Activated CD4-positive, alpha-beta T cell treated with anti-CD3 and anti-CD28 coated beads, Interleukin-2, amount 10 ng/mL, durations not matched to agents 24 days and 14 days (primary cell): ENCODE measurements at regions of chr10 and their contacts with region 1.

Region 1: GRCh38 chr10:45672181-45673073 is at the start of gene ZFAND4:
- DNase-seq: peak; percentile 98
- H3K4me3 Mint-ChIP-seq: peak within 1 kb of the TSS; percentile 96
- H3K27ac Mint-ChIP-seq: peak within 1 kb of the TSS; percentile 85
- H3K4me1 Mint-ChIP-seq: peaks cover 21% of the 10 kb centered on the region
- H3K27me3 Mint-ChIP-seq: no peaks in the 10 kb centered on the region
- total RNA-seq, gene ZFAND4: 9.1 and 9.3 TPM in 2 replicates

Region 2: GRCh38 chr10:45008524-45009161 is 663.8 kb before region 1 on chr10:
- intact Hi-C with region 1: loop called (anchors 10 kb)
- DNase-seq: peak; percentile 81
- H3K4me3 Mint-ChIP-seq: no peak overlapping the region
- H3K27ac Mint-ChIP-seq: no peak overlapping the region
- H3K4me1 Mint-ChIP-seq: peaks cover 3% of the 10 kb centered on the region
- H3K27me3 Mint-ChIP-seq: peaks cover 3% of the 10 kb centered on the region

Region 3: DNA sequence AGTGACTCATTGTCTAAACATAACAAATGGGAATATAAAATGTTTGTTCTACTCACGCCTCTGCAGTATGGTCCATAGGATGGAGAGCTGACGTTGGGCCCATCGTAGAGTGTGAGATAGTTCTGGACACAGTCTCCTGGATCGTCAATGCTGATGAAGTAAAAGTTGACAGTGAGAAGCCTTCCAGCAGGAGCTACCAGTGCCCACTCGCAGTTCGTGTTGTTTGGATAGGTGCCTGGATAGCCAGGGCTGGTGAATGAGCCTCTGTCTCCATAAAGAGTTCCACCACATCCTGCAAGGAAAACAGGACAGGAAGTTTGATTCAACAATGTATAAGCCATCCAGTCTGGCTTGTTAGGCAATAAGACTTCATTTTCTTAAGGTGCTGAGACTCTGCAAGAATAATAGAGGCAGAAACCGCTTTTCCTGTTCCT is 436.6 kb before region 1 on chr10:
- intact Hi-C with region 1: loop called (anchors 5 kb)
- DNase-seq: no peak
- H3K4me3 Mint-ChIP-seq: no peak overlapping the region
- H3K27ac Mint-ChIP-seq: no peak overlapping the region
- H3K4me1 Mint-ChIP-seq: peaks cover 12% of the 10 kb centered on the region
- H3K27me3 Mint-ChIP-seq: peaks cover 13% of the 10 kb centered on the region

Region 4: DNA sequence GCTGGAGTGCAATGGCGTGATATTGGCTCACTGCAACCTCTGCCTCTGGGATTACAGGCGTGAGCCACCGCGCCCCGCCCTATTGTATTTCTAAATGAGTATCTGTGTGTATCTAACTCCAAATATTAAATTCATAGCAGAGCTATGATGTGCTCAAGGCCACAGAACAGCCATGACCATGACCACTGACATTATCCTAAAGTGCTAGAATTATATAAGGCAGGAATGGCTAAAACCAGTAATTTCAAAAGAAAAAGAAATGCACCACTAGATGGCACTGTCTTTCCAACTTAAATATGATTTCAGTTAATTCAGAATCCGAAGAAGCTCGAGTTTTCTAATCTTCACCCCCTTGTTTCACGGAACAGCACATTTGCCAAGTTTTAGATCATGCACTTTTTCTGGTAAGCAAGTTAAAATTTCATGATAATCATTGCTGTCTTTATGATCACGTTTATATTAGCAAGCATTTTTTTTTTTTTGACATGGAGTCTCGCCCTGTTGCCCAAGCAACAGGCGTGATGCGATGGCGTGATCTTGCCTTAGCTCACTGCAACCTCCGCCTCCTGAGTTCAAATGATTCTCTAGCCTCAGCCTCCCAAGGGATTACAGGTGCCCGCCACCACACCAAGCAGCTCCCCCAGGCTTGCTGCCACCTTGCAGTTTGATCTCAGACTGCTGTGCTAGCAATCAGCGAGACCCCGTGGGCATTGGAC is 422.3 kb before region 1 on chr10:
- intact Hi-C with region 1: loop called (anchors 5 kb)
- DNase-seq: peak; percentile 74
- H3K4me3 Mint-ChIP-seq: peak overlapping the region; percentile 51
- H3K27ac Mint-ChIP-seq: no peak overlapping the region
- H3K4me1 Mint-ChIP-seq: peaks cover 16% of the 10 kb centered on the region
- H3K27me3 Mint-ChIP-seq: peaks cover 20% of the 10 kb centered on the region

Region 5: DNA sequence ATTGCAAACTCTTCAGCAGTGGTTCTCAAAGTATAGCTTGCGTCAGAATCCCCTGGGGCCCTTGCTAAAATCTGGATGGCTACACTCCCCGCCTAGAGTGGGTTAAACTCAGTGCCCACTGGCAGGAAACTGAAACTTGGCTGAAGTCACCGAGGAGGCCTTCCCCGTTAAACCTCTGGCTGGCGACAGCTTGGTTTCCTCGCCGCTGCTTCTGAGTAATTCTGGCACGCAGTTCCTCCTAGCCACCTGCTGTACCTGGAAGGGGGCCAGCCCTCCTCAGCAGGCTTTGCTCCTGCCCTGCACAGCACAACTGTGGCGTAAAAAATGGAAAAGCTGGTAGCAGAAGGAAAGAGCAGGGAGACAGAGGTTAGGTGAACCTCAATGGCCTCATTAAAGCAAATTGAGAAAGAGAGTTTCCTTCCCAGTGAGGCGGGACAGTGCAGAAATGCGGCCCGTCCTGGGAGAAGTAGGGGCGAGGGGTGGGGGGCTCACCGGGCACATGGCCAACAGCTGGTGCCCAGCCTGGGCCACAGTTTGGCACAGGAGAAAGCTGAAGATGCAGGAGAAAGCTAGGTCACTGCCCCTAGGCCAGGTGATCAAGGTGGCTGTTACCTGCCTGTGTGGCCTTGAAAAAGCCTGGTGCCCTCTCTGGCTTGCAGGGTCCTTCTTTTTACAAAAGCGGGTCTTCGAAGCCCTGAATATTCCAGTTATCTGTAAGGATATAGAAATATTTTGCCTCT is 251.8 kb before region 1 on chr10:
- intact Hi-C with region 1: loop called (anchors 5 kb)
- DNase-seq: peak; percentile 89
- H3K4me3 Mint-ChIP-seq: peak overlapping the region; percentile 98
- H3K27ac Mint-ChIP-seq: peak overlapping the region; percentile 99
- H3K4me1 Mint-ChIP-seq: peaks cover 73% of the 10 kb centered on the region
- H3K27me3 Mint-ChIP-seq: no peaks in the 10 kb centered on the region

Region 6: DNA sequence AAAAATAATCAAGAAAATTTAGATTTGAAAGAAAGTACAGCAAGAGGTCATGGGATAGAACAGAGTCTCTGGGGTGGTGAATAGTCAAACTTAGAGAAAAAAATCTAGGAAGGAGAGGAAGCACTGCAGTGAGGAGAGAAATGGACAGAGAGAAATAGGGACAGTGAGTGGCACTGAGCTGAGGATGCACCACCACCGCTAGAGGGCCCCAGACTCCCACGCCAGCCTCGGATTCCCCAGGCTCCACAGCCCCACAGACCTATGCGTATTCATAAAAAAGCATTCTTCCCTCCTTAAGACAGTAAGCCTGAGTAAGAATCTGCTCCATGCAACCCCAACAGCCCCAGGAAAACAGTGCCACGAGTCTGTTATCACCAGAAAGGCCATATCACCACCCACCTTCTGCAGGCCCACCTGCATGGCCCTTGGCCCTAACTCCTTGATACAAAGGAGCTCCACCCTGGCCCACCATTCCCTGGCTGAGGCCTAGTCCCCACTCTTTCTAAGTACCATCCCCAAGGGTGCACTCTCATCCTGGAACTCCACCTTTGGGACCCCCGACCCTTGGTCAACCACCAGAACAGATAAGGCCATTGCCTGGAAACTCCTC is 207.4 kb before region 1 on chr10:
- intact Hi-C with region 1: loop called (anchors 1 kb)
- DNase-seq: peak; percentile 92
- H3K4me3 Mint-ChIP-seq: no peak overlapping the region
- H3K27ac Mint-ChIP-seq: no peak overlapping the region
- H3K4me1 Mint-ChIP-seq: peaks cover 39% of the 10 kb centered on the region
- H3K27me3 Mint-ChIP-seq: no peaks in the 10 kb centered on the region

Region 7: DNA sequence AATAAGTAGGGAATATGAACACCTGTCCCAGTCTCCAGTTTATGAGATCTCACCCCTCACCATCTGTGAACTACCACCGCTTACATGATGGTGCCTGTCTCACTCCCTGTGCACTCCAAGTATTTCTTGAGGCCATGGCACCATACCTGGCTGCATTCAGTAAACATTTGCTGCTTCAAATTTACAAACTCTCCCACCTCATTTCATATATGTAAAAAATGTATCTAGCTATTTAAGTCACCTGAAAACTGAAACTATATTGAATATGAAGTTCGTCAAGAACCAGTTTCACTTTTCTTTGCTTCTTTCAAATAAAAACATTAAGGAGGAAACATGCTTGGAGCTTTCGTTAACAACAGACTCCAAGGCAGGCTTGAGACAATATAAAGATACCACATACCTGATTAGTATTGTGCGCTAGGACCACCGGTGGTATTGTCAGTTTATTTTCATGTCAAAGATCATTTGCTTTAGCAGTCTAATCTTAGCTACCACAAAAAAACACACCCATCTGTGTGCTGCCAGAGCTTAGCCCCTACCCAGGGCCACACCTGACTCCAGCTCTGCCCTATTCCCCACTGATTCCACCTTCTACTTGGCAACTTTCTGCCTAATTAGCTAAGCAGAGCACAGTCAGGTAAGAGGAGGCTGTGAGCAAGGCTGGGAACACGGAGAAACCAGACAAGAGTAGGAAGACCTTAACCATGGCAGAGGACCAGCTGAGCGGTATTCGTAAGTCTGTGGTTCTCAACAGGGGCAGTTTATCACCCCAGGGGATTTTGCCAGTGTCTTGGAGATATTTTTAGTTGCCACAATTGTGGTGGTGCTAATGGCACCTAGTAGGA is 91.8 kb before region 1 on chr10:
- intact Hi-C with region 1: loop called (anchors 5 kb)
- DNase-seq: peak; percentile 72
- H3K4me3 Mint-ChIP-seq: peak overlapping the region; percentile 78
- H3K27ac Mint-ChIP-seq: peak overlapping the region; percentile 83
- H3K4me1 Mint-ChIP-seq: peaks cover 26% of the 10 kb centered on the region
- H3K27me3 Mint-ChIP-seq: peaks cover 3% of the 10 kb centered on the region